ENCODE measurements at regions of chr11 and their contacts with region 1.

Region 1: GRCh38 chr11:66976048-66976467 is 954 bp downstream of the C11orf86 start:
- DNase-seq: peak; percentile 57
- H3K4me3 ChIP-seq: no peak overlapping the region
- H3K27ac ChIP-seq: no peak overlapping the region
- H3K4me1 ChIP-seq: peaks cover under 1% of the 10 kb centered on the region
- H3K27me3 ChIP-seq: no peaks in the 10 kb centered on the region
- CTCF ChIP-seq: peak; percentile 86

Region 2: DNA sequence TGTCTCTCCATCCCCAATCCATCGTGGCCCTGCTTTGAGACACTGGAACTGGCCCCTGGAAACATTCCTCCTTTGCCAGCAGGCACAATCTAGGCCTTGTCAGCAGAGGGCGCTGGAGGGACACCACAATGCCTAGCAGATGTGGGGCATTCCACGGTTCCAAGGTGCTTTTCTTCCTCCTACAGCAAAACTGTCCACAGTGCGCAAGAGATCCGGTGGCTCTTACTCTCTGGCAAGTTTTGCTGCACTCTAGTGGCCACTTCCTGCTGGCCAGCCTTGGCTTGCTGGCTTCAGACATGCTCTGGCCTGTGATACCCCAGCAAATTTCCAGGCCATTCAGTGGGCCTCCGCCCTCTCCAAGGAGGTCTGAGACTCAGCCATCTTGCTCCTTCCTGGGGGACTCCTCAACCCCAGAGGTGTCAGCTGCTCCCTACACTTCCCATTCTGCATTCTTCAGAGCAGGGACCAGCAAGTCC is 281.3 kb before region 1 on chr11:
- CTCF ChIA-PET with region 1: no interaction called
- POLR2A ChIA-PET with region 1: no interaction called
- intact Hi-C with region 1: loop called (anchors 5 kb)
- DNase-seq: peak; percentile 95
- H3K4me3 ChIP-seq: no peak overlapping the region
- H3K27ac ChIP-seq: no peak overlapping the region
- H3K4me1 ChIP-seq: no peaks in the 10 kb centered on the region
- H3K27me3 ChIP-seq: no peaks in the 10 kb centered on the region
- CTCF ChIP-seq: peak; percentile 99

Region 3: GRCh38 chr11:66842896-66843775 is 132.9 kb before region 1 on chr11 and contains the start of gene RCE1:
- CTCF ChIA-PET with region 1: no interaction called
- POLR2A ChIA-PET with region 1: no interaction called
- intact Hi-C with region 1: loop called (anchors 1 kb)
- DNase-seq: peak; percentile 96
- H3K4me3 ChIP-seq: peak within 1 kb of the TSS; percentile 91
- H3K27ac ChIP-seq: peak within 1 kb of the TSS; percentile 93
- H3K4me1 ChIP-seq: peaks cover 9% of the 10 kb centered on the region
- H3K27me3 ChIP-seq: no peaks in the 10 kb centered on the region
- CTCF ChIP-seq: no peak
- total RNA-seq, gene RCE1: 33.1 and 35.0 TPM in 2 replicates

Region 4: GRCh38 chr11:66891851-66892660 is 84.0 kb before region 1 on chr11:
- CTCF ChIA-PET with region 1: interaction called, 10 read pairs
- POLR2A ChIA-PET with region 1: no interaction called
- intact Hi-C with region 1: no loop called
- DNase-seq: peak; percentile 52
- H3K4me3 ChIP-seq: no peak overlapping the region
- H3K27ac ChIP-seq: no peak overlapping the region
- H3K4me1 ChIP-seq: peaks cover 11% of the 10 kb centered on the region
- H3K27me3 ChIP-seq: no peaks in the 10 kb centered on the region
- CTCF ChIP-seq: no peak

Region 5: DNA sequence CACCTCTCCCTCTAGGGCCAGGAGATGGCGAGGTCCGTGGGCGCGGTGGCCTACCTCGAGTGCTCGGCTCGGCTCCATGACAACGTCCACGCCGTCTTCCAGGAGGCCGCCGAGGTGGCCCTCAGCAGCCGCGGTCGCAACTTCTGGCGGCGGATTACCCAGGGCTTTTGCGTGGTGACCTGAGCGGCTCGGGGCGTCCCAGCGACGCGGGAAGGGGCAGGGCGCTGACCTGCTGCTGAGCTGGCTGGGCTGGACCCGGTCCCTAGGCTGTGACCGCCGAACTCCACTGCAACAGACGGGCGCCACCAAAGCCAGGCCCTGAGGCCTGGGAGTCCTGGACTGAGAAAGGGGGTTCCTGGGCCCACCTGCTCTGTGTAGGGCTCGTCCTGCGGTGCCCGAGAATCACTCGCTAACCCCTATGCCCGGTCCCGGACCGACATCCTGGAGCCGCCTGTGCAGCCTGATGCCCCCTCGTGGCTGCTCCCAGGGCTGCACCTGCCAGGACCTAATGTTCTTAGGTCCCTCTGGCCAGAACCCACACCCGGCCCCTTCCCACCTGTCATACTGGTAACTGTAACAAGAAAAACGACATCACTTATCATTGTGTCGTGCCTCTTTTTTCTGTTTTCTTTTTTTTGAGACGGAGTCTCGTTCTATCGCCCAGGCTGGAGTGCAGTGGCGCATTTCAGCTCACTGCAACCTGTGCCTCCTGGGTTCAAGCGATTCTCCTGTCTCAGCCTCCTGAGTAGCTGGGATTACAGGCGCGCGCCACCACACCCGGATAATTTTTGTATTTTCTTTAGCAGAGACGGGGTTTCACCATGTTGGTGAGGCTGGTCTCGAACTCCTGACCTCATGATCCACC is 95.6 kb after region 1 on chr11:
- CTCF ChIA-PET with region 1: no interaction called
- POLR2A ChIA-PET with region 1: no interaction called
- intact Hi-C with region 1: no loop called
- DNase-seq: peak; percentile 47
- H3K4me3 ChIP-seq: no peak overlapping the region
- H3K27ac ChIP-seq: no peak overlapping the region
- H3K4me1 ChIP-seq: peaks cover 6% of the 10 kb centered on the region
- H3K27me3 ChIP-seq: no peaks in the 10 kb centered on the region
- CTCF ChIP-seq: peak; percentile 67

Region 6: GRCh38 chr11:67136156-67136555 is 160.1 kb after region 1 on chr11:
- CTCF ChIA-PET with region 1: no interaction called
- POLR2A ChIA-PET with region 1: no interaction called
- intact Hi-C with region 1: no loop called
- DNase-seq: no peak
- H3K4me3 ChIP-seq: no peak overlapping the region
- H3K27ac ChIP-seq: no peak overlapping the region
- H3K4me1 ChIP-seq: no peaks in the 10 kb centered on the region
- H3K27me3 ChIP-seq: no peaks in the 10 kb centered on the region
- CTCF ChIP-seq: no peak